Ovary (tissue), 10 donors: ENCODE measurements at regions of chr13 and their contacts with region 1.

Region 1: DNA sequence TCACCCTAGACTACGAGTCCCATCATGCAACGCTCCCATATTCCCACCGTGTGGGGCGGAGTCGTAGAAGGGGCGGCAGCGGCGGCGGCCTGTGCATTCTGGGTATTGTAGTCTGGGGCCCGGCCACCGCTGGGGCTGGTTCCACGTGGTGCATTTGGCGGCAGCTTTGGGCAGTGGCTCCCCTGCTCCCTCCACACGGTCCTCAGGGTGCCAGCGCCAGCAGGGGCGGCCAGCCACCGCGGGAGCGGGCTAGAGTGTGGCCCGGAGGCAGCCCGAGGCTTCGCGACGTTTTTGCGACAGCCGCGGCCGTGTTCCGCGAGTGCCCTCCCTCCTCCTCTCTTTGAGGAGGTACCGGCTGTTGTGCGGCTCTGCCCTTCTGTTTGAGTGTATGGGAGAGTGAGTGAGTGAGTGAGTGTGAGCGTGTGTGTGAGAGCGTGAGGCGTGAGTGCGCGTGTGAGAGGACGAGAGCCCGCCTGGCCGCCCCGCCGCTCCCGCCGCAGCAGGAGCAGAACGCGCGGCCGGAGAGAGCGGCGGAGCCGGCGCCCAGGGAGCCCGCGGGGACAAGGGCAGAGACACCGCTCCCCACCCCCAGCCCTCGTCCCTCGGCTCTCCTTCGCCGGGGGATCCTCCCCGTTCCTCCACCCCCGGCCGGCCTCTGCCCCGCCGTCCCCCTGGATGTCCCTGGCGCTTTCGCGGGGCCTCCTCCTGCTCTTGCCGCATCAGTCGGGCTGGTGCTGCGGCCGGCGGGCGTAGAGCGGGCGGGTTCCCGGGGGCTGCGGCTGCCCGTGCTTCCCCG is at the start of gene CDK8:
- DNase-seq: peak; percentile 87 to 93 (median 91)
- H3K4me3 ChIP-seq: peak within 1 kb of the TSS; percentile 96
- H3K27ac ChIP-seq: peak within 1 kb of the TSS; percentile 63 to 92
- H3K4me1 ChIP-seq: no peaks in the 10 kb centered on the region
- H3K27me3 ChIP-seq: no peaks in the 10 kb centered on the region
- CTCF ChIP-seq: no peak
- EP300 ChIP-seq: no peak
- POLR2A ChIP-seq: no peak
- total RNA-seq, gene CDK8: 6.7 to 9.2 (median 8.3) TPM

Region 2: GRCh38 chr13:26202365-26202972 is 51.5 kb before region 1 on chr13:
- intact Hi-C with region 1: loop called in 1 of 4 experiments (anchors 5 kb)
- DNase-seq: no peak
- H3K4me3 ChIP-seq: no peak overlapping the region
- H3K27ac ChIP-seq: no peak overlapping the region
- H3K4me1 ChIP-seq: no peaks in the 10 kb centered on the region
- H3K27me3 ChIP-seq: no peaks in the 10 kb centered on the region
- CTCF ChIP-seq: no peak
- EP300 ChIP-seq: no peak
- POLR2A ChIP-seq: no peak

Region 3: DNA sequence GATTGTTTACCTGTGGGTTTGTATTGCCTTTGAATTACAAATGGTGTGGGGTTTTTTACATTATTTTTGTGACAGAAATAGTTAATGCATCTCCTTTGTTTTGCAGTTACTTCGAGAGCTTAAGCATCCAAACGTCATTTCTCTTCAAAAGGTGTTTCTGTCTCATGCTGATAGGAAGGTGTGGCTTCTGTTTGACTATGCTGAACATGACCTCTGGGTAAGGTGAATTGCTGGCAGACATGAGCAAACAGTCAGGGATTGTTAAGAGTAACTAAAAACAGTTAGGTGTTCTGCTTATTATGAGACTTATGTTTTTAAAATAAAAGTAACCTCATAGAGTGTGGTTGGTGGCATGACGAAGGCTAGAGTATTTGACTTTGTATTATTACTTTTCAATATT is 95.0 kb after region 1 on chr13:
- intact Hi-C with region 1: no loop called
- DNase-seq: no peak
- H3K4me3 ChIP-seq: no peak overlapping the region
- H3K27ac ChIP-seq: no peak overlapping the region
- H3K4me1 ChIP-seq: no peaks in the 10 kb centered on the region
- H3K27me3 ChIP-seq: no peaks in the 10 kb centered on the region
- CTCF ChIP-seq: no peak
- EP300 ChIP-seq: no peak
- POLR2A ChIP-seq: no peak